ENCODE measurements at regions of chr1 and their contacts with region 1.

Region 1: DNA sequence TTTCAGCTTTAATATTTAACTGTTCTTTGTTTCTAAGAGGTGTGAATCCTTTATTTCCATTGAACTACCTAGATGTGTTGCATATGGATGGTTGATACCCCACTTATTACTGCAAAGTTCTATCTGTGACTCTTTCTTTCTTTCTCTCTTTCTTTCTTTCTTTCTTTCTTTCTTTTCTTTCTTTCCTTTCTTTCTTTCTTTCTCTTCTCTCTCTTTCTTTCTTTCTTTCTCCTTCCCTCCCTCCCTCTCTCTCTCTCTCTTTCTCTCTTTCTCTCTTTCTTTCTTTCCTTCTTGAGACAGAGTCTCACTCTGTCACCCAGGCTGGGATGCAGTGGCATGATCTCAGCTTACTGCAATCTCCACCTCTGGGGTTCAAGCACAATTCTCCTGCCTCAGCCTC is 34.1 kb downstream of the GABPB2 start:
- DNase-seq: no peak
- H3K4me3 ChIP-seq: no peak overlapping the region
- H3K27ac ChIP-seq: no peak overlapping the region
- H3K4me1 ChIP-seq: no peaks in the 10 kb centered on the region
- H3K27me3 ChIP-seq: no peaks in the 10 kb centered on the region
- CTCF ChIP-seq: no peak
- POLR2A ChIP-seq: no peak

Region 2: DNA sequence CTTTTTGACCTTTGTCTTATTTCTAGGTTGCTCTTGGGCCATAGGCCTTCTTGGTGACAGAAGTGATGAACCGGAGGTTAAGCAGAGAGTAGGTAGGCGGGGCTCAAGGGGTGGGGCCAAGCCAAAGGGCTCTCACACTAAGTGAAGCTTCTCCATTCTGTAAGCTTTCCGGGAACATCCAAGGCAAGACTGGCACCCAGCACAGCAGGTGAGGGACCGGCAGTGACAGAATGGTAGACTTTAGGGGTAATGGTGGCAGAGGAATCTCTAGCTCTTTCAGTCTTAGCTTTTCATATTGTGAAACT is 51.8 kb after region 1 on chr1 and contains the start of gene TNFAIP8L2:
- intact Hi-C with region 1: loop called (anchors 5 kb)
- DNase-seq: peak; percentile 95
- H3K4me3 ChIP-seq: peak within 1 kb of the TSS; percentile 54 to 91 (median 62)
- H3K27ac ChIP-seq: peak within 1 kb of the TSS; percentile 66 to 94 (median 85)
- H3K4me1 ChIP-seq: peaks cover 15 to 58% (median 41%) of the 10 kb centered on the region in 6 donors
- H3K27me3 ChIP-seq: no peaks in the 10 kb centered on the region
- CTCF ChIP-seq: no peak
- POLR2A ChIP-seq: no peak
- total RNA-seq, gene TNFAIP8L2: 26.3 to 48.0 (median 35.3) TPM

Measured in spleen (tissue), 13 donors.